ENCODE measurements at regions of chr12 and their contacts with region 1.

Region 1: GRCh38 chr12:13100882-13101769 is 2.3 kb downstream of the GSG1 start:
- DNase-seq: peak; percentile 96
- H3K4me3 ChIP-seq: peak overlapping the region; percentile 54
- H3K27ac ChIP-seq: peak overlapping the region; percentile 91
- H3K4me1 ChIP-seq: peaks cover 40% of the 10 kb centered on the region
- H3K27me3 ChIP-seq: no peaks in the 10 kb centered on the region
- CTCF ChIP-seq: no peak

Region 2: GRCh38 chr12:12901158-12901791 is 199.9 kb before region 1 on chr12:
- CTCF ChIA-PET with region 1: no interaction called
- POLR2A ChIA-PET with region 1: no interaction called
- intact Hi-C with region 1: no loop called
- DNase-seq: peak; percentile 41
- H3K4me3 ChIP-seq: no peak overlapping the region
- H3K27ac ChIP-seq: no peak overlapping the region
- H3K4me1 ChIP-seq: no peaks in the 10 kb centered on the region
- H3K27me3 ChIP-seq: no peaks in the 10 kb centered on the region
- CTCF ChIP-seq: no peak

Region 3: DNA sequence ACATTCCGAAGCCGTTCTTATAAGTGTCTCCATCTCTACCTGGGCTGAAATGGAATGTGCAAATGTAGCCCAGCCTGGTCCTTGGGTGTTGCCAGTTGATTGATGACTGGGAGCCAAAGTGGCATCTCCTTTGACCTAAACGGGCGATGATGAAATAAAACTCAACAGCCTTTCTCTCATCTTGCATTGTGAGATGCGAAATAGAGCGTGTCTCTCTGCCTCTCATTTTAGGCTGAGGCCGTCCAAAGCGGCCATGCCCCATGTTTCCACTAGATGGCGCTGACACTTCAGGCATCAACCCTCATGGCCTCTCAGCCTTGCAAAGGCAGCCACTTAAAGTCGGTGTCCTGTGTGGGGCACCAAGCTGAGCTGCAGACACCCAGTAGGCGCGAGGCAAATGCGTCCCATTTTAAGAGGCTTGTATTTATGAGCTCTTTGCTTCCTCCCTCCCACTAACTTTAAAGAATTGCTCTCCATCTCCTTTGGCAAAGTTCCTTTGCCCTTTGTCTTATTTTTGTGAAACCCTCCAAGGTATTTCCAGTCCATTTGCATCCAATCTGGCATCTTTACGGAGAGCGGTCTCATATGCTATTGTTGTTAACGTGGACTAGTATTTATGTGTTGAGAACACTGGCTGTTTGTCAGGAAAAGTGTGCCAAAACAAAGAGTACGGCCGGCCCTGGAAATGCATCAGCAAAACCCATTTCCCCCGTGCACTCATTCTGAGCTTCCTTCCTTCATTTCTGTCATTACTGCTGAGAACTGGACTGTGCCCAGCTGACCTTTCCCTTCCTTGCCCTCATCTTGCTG is 184.8 kb before region 1 on chr12:
- CTCF ChIA-PET with region 1: no interaction called
- POLR2A ChIA-PET with region 1: no interaction called
- intact Hi-C with region 1: loop called (anchors 2 kb)
- DNase-seq: peak; percentile 90
- H3K4me3 ChIP-seq: no peak overlapping the region
- H3K27ac ChIP-seq: no peak overlapping the region
- H3K4me1 ChIP-seq: peaks cover 7% of the 10 kb centered on the region
- H3K27me3 ChIP-seq: no peaks in the 10 kb centered on the region
- CTCF ChIP-seq: peak; percentile 97

Region 4: GRCh38 chr12:12983420-12984035 is 117.6 kb before region 1 on chr12:
- CTCF ChIA-PET with region 1: no interaction called
- POLR2A ChIA-PET with region 1: no interaction called
- intact Hi-C with region 1: loop called (anchors 5 kb)
- DNase-seq: peak; percentile 65
- H3K4me3 ChIP-seq: no peak overlapping the region
- H3K27ac ChIP-seq: no peak overlapping the region
- H3K4me1 ChIP-seq: peaks cover 11% of the 10 kb centered on the region
- H3K27me3 ChIP-seq: no peaks in the 10 kb centered on the region
- CTCF ChIP-seq: peak; percentile 71

Region 5: DNA sequence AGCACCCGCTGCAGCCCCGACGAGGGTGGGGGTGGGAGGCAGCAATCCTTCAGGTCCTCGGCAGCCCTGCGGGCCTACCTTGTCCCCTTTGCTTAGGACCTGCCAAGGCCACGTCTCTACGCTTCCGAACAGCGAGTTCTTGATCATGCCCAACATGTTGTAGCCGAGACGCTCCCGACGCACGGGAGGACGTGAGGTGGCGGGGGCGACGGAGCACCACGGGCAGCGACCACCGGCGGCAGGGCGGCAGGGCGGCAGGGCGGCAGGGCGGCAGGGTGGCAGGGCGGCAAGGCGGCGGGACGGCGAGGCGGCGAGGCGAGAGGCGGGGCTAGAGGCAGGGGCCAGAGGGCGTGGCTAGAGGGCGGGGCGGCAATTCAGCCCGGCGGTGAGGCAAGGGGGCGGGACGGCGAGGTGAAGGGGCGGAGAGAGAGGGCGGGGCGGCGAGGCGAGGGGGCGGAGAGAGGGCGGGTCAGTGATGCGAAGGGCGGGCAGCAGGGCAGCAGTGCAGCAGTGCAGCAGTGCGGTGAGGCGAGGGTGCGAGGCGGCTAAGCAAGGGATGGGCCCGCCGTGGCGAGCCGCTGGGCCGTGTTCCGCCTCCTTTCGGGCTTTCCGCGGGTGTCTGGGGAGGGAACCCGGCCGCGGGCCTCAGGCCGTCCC is 101.0 kb before region 1 on chr12 and contains the start of gene HEBP1:
- CTCF ChIA-PET with region 1: no interaction called
- POLR2A ChIA-PET with region 1: no interaction called
- intact Hi-C with region 1: loop called (anchors 2 kb)
- DNase-seq: peak; percentile 87
- H3K4me3 ChIP-seq: peak within 1 kb of the TSS; percentile 84
- H3K27ac ChIP-seq: peak within 1 kb of the TSS; percentile 78
- H3K4me1 ChIP-seq: no peaks in the 10 kb centered on the region
- H3K27me3 ChIP-seq: no peaks in the 10 kb centered on the region
- CTCF ChIP-seq: no peak
- total RNA-seq, gene HEBP1: 26.7 and 28.1 TPM in 2 replicates

Region 6: DNA sequence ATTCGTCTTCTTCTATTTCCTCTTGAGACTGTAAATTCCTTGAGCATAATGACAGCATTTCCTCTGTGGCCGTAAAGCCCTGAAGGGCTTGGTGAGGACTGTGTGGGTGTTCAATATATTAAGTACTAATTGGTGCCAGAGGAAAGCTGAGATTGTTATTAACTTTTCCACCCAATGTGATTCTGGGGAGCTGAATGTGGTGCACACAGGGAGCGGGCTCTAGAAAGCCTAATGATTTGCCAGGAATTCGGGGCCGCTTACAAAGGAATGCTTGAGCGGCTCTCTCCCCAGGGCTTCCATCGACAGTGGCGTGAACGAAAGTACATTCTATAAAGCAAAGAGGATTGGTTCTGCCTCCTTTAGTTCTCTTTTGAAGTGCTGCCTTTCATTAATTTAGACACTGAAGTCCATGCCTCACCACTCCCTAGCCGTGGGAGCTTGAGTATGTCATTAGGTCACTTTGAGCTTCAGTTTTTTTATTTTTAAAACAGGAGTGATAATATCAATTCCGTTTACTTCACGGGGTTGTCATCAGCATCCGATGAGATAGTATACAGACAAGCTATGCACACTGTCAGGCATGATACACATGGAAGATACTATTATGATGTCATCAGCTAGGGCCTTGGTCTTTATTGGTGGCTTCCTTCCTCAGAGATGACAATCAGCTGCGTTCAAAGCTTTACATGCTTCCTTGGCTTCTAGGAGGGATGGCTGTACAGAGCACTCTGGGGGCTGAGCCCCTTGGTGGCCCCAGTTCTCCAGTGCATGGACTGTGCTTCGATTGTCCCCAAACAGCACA is 13.3 kb after region 1 on chr12:
- CTCF ChIA-PET with region 1: no interaction called
- POLR2A ChIA-PET with region 1: interaction called, 10 read pairs
- intact Hi-C with region 1: no loop called
- DNase-seq: peak; percentile 89
- H3K4me3 ChIP-seq: peak overlapping the region; percentile 25
- H3K27ac ChIP-seq: peak overlapping the region; percentile 70
- H3K4me1 ChIP-seq: peaks cover 30% of the 10 kb centered on the region
- H3K27me3 ChIP-seq: no peaks in the 10 kb centered on the region
- CTCF ChIP-seq: no peak

Region 7: GRCh38 chr12:13211859-13212664 is 110.9 kb after region 1 on chr12:
- CTCF ChIA-PET with region 1: interaction called, 11 read pairs
- POLR2A ChIA-PET with region 1: no interaction called
- intact Hi-C with region 1: loop called (anchors 1 kb)
- DNase-seq: peak; percentile 89
- H3K4me3 ChIP-seq: no peak overlapping the region
- H3K27ac ChIP-seq: peak overlapping the region; percentile 10
- H3K4me1 ChIP-seq: peaks cover 35% of the 10 kb centered on the region
- H3K27me3 ChIP-seq: no peaks in the 10 kb centered on the region
- CTCF ChIP-seq: peak; percentile 82

Region 8: GRCh38 chr12:13436696-13437391 is 335.7 kb after region 1 on chr12:
- CTCF ChIA-PET with region 1: interaction called, 11 read pairs
- POLR2A ChIA-PET with region 1: no interaction called
- intact Hi-C with region 1: no loop called
- DNase-seq: peak; percentile 71
- H3K4me3 ChIP-seq: no peak overlapping the region
- H3K27ac ChIP-seq: no peak overlapping the region
- H3K4me1 ChIP-seq: peaks cover 15% of the 10 kb centered on the region
- H3K27me3 ChIP-seq: no peaks in the 10 kb centered on the region
- CTCF ChIP-seq: no peak